IMR-90 (cell line): ENCODE measurements at regions of chr22 and their contacts with region 1.

Region 1: GRCh38 chr22:36144886-36145541 is 15.5 kb downstream of the APOL3 start:
- DNase-seq: peak; percentile 69
- ATAC-seq: peak; percentile 96
- H3K4me3 ChIP-seq: no peak overlapping the region
- H3K27ac ChIP-seq: no peak overlapping the region
- H3K4me1 ChIP-seq: no peaks in the 10 kb centered on the region
- H3K27me3 ChIP-seq: peaks cover 12% of the 10 kb centered on the region
- CTCF ChIP-seq: peak; percentile 81
- POLR2A ChIP-seq: no peak
- RAD21 ChIP-seq: peak; percentile 90

Region 2: GRCh38 chr22:36180038-36180880 is 35.2 kb after region 1 on chr22:
- CTCF ChIA-PET with region 1: interaction called, 4 read pairs
- POLR2A ChIA-PET with region 1: no interaction called
- dilution Hi-C with region 1: no loop called
- in situ Hi-C with region 1: loop called (anchors 5 kb)
- intact Hi-C with region 1: loop called (anchors 1 kb)
- DNase-seq: peak; percentile 56
- ATAC-seq: peak; percentile 97
- H3K4me3 ChIP-seq: no peak overlapping the region
- H3K27ac ChIP-seq: no peak overlapping the region
- H3K4me1 ChIP-seq: no peaks in the 10 kb centered on the region
- H3K27me3 ChIP-seq: peaks cover 33% of the 10 kb centered on the region
- CTCF ChIP-seq: peak; percentile 79
- POLR2A ChIP-seq: no peak
- RAD21 ChIP-seq: peak; percentile 73

Region 3: GRCh38 chr22:36277482-36278291 is 132.7 kb after region 1 on chr22:
- CTCF ChIA-PET with region 1: no interaction called
- POLR2A ChIA-PET with region 1: no interaction called
- dilution Hi-C with region 1: no loop called
- in situ Hi-C with region 1: no loop called
- intact Hi-C with region 1: loop called (anchors 5 kb)
- DNase-seq: peak; percentile 56
- ATAC-seq: peak; percentile 74
- H3K4me3 ChIP-seq: no peak overlapping the region
- H3K27ac ChIP-seq: no peak overlapping the region
- H3K4me1 ChIP-seq: no peaks in the 10 kb centered on the region
- H3K27me3 ChIP-seq: no peaks in the 10 kb centered on the region
- CTCF ChIP-seq: peak; percentile 63
- POLR2A ChIP-seq: peak; percentile 38; the same call in 1 of the 2 replicates
- RAD21 ChIP-seq: peak; percentile 37

Region 4: DNA sequence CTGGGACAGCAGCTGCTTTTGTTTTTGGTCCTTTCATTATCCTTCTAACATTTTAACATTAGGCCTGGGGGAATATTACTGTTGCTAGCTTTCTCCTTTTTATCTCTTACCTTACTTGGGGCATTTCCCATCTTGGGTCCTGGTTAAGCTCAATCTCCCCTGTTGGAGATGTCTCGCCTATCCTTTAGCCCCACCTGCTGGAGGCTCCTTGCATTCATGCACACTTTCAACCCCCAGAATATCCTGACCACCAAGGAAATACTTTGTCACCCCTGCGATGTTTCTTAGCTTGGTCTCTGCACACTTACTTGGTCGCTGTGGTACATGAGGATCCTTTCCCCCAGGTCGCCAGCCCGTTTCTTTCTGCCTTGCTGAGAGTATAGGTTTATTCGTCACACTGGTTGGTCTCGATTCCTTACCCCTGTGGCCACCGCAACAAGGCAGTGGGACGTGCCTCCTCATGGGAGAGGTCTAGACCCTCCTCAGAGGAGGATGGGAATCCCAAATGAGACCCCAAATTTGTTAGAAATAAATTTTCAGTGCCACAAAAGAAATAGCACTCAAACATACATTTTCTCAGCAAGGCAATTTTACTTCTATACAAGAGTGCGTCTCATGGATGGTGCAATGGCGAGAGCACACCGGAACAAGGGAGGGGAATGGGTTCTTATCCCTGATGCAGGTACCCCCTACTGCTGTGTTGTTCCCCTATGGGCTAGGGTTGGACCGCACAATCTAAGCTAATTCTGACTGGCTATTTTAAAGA is 341.8 kb after region 1 on chr22:
- CTCF ChIA-PET with region 1: no interaction called
- POLR2A ChIA-PET with region 1: no interaction called
- dilution Hi-C with region 1: no loop called
- in situ Hi-C with region 1: loop called (anchors 5 kb)
- intact Hi-C with region 1: loop called (anchors 2 kb)
- DNase-seq: peak; percentile 68
- ATAC-seq: 0 out of 2 replicates have a peak, but pooled peaks have one; percentile 22
- H3K4me3 ChIP-seq: no peak overlapping the region
- H3K27ac ChIP-seq: no peak overlapping the region
- H3K4me1 ChIP-seq: peaks cover 1% of the 10 kb centered on the region
- H3K27me3 ChIP-seq: no peaks in the 10 kb centered on the region
- CTCF ChIP-seq: peak; percentile 83
- POLR2A ChIP-seq: 0 out of 2 replicates have a peak, but pooled peaks have one; percentile 29
- RAD21 ChIP-seq: peak; percentile 92